Aorta (tissue), 5 donors: ENCODE measurements at regions of chr15 and their contacts with region 1.

Region 1: GRCh38 chr15:75420698-75421097 is 30.8 kb downstream of the SIN3A start:
- DNase-seq: no peak
- ATAC-seq: no peak
- H3K4me3 ChIP-seq: no peak overlapping the region
- H3K27ac ChIP-seq: no peak overlapping the region
- H3K4me1 ChIP-seq: no peaks in the 10 kb centered on the region
- H3K27me3 ChIP-seq: no peaks in the 10 kb centered on the region

Region 2: GRCh38 chr15:75302318-75302717 is 118.4 kb before region 1 on chr15:
- intact Hi-C with region 1: no loop called
- DNase-seq: no peak
- ATAC-seq: no peak
- H3K4me3 ChIP-seq: no peak overlapping the region
- H3K27ac ChIP-seq: no peak overlapping the region
- H3K4me1 ChIP-seq: no peaks in the 10 kb centered on the region
- H3K27me3 ChIP-seq: no peaks in the 10 kb centered on the region

Region 3: DNA sequence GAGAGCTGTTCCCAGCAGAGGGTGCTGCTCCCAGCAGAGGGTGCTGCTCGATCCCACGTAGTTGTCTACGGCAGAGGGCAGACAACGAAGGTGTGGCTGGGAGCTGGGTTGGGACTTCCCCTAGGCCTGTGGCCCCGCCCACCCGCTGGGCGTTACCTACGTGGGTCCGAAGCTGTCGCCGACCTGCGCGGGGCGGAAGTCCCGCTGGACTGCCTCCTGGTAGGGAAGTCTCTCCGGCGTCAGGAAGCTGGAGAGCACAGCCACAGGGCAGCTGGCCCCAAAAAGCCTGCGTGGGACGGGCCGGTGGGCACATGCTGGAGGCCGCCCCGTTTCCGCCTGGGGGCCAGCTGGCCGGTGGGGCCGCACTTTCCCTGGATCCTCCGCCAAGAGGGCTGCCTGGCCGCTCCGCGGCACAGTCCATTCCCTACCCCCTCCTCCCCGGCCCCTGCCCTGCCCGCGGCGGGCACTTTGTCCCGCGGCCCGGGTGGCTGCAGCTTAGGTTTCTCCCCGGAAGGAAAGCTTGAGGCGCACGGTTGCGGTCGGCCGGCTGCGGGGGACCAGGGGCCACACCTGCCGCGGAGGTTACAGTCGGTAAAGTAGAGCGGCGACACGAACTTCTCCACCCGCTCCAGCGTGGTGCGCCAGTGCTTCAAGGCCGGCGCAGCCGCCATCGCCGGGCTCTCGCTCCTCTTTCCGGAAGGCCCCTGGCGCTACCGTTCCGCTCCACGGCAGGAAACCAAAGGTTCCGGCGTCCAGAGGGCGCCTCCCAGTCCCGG is 52.6 kb before region 1 on chr15 and contains the start of gene MAN2C1:
- intact Hi-C with region 1: loop called in 1 of 2 experiments (anchors 10 kb)
- DNase-seq: peak; percentile 96 to 98
- ATAC-seq: peak; percentile 96
- H3K4me3 ChIP-seq: peak within 1 kb of the TSS; percentile 59 to 70
- H3K27ac ChIP-seq: peak within 1 kb of the TSS; percentile 1 to 90
- H3K4me1 ChIP-seq: no peaks in the 10 kb centered on the region
- H3K27me3 ChIP-seq: no peaks in the 10 kb centered on the region
- total RNA-seq, gene MAN2C1: 198 to 257 TPM